ENCODE measurements at regions of chr20 and their contacts with region 1.

Region 1: GRCh38 chr20:45322952-45323383 is 14.9 kb upstream of the MATN4 start:
- DNase-seq: peak in 8 of 10 donors; percentile 40 to 78 (median 66)
- H3K4me3 ChIP-seq: no peak overlapping the region
- H3K27ac ChIP-seq: peak overlapping the region in 12 of 59 donors; percentile 6 to 56 (median 23)
- H3K27me3 ChIP-seq: no peaks in the 10 kb centered on the region
- CTCF ChIP-seq: peak in 54 of 56 donors; percentile 19 to 80 (median 58)

Region 2: DNA sequence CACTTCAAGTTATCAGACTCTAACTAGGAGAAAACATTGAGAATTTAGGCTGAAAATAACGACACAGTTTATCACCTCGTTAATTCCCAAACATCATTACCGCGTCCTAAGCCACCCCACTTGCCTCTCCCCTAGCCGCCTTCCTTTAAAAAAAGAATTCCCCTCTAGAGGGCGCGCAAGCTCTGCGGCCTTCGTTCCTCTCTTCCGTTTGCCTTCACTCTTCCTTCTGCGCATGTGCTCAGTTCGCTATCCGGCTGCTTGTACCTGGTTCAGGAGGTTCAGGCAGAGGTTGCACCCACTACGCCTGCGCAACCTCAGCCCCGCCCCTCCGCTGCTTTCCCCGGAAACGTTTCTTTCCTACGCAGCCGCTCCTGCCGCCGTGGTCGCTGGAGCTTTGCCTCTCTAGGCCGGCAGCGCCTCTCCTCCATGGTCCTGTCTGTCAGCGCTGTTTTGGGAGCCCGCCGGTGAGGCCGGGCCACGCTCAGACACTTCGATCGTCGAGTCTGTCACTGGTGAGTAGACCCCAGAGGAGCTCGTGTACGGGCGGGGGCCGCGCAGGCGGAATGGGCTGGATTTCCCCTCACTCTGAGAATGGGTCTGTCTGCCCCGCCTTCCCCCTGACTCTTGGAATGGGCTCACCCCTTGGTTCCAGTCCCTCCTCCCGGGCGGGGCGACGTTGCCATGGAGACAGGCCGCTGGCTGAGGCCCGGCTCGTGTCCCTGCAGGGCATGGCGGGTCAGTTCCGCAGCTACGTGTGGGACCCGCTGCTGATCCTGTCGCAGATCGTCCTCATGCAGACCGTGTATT is 40.0 kb after region 1 on chr20 and contains the start of gene SYS1:
- intact Hi-C with region 1: loop called (anchors 5 kb)
- DNase-seq: peak; percentile 96 to 98 (median 96)
- H3K4me3 ChIP-seq: peak within 1 kb of the TSS; percentile 48 to 99 (median 81)
- H3K27ac ChIP-seq: peak within 1 kb of the TSS; percentile 64 to 99 (median 96)
- H3K27me3 ChIP-seq: no peaks in the 10 kb centered on the region
- CTCF ChIP-seq: peak; percentile 85 to 99 (median 95)
- total RNA-seq, gene SYS1: 19.5 to 49.7 (median 29.3) TPM

Region 3: GRCh38 chr20:45368221-45368980 is 45.4 kb after region 1 on chr20:
- intact Hi-C with region 1: loop called in 1 of 2 experiments (anchors 5 kb)
- DNase-seq: no peak
- H3K4me3 ChIP-seq: no peak overlapping the region
- H3K27ac ChIP-seq: peak overlapping the region in 20 of 59 donors; percentile 1 to 58 (median 33)
- H3K27me3 ChIP-seq: no peaks in the 10 kb centered on the region
- CTCF ChIP-seq: no peak

Measured in dorsolateral prefrontal cortex (tissue), 120 donors.